ENCODE measurements at regions of chr18 and their contacts with region 1.

Region 1: DNA sequence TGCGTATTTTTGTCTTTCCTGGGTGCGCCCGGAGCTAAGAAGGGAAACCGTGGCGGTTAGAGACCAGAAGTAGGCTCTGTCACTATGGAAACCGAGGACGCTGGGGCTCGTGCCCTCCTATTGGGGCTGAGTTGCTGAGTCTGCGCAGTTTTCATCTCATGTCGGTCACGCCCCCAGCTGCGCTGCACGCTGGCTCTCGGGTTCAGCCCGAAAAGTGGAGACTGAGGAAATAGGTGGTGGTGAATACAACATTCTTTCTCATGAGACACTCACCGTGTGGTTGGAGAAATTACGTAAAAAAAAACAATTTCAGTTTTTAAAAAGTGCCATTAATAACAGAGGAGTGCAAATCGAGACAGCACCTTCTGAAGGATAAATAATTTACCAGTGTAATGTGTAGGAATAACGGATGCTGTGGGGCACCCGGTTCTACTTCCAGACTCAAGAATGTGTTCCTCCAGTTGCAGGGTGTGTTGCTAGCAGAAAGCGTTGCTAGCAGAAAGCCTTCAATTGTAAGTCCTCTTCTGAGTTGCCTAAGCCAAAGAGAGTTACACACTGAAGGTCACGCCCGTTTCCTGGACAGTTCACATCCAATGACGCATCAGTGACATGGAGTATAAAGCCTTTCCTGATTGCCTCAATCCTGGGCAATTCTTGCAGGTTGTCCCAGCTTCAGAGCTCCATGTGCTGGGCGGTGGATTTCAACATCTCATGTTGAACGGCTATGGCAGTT is 20.4 kb upstream of the CXXC1 start:
- DNase-seq: peak; percentile 70 to 93
- H3K4me3 ChIP-seq: peak overlapping the region; percentile 78
- H3K27ac ChIP-seq: peak overlapping the region; percentile 99
- H3K4me1 ChIP-seq: peaks cover 18% of the 10 kb centered on the region
- H3K27me3 ChIP-seq: no peaks in the 10 kb centered on the region; the same call in 1 of the 2 replicates
- CTCF ChIP-seq: no peak

Region 2: GRCh38 chr18:50266248-50266704 is 41.6 kb before region 1 on chr18 and contains the start of gene CFAP53:
- CTCF ChIA-PET with region 1: no interaction called
- POLR2A ChIA-PET with region 1: no interaction called
- intact Hi-C with region 1: loop called (anchors 2 kb)
- DNase-seq: peak; percentile 82 to 83
- H3K4me3 ChIP-seq: peak within 1 kb of the TSS; percentile 83
- H3K27ac ChIP-seq: peak within 1 kb of the TSS; percentile 2; the same call in 1 of the 2 replicates
- H3K4me1 ChIP-seq: peaks cover 5% of the 10 kb centered on the region
- H3K27me3 ChIP-seq: no peaks in the 10 kb centered on the region
- CTCF ChIP-seq: no peak
- total RNA-seq, gene CFAP53: 1.9 and 2.1 TPM in 2 replicates

Region 3: DNA sequence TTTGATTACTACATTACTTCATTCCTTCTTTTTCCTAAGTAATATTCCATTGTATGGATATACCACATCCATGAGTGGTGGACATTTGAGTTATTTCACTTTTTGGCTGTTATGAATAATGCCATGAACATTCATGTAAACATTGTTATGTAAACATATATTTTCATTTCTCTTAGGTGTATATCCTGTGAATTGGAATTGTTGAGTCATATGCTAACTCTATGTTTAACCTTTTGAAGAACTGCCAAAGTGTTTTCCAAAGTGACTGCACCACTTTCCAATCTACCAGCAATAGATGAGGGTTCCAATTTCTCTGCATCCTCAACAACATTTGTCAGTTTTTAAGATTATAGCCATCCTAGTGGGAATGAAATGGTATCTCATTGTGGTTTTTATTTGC is 22.3 kb after region 1 on chr18:
- CTCF ChIA-PET with region 1: no interaction called
- POLR2A ChIA-PET with region 1: no interaction called
- intact Hi-C with region 1: no loop called
- DNase-seq: no peak
- H3K4me3 ChIP-seq: no peak overlapping the region
- H3K27ac ChIP-seq: no peak overlapping the region
- H3K4me1 ChIP-seq: no peaks in the 10 kb centered on the region
- H3K27me3 ChIP-seq: peaks cover 6% of the 10 kb centered on the region; the same call in 1 of the 2 replicates
- CTCF ChIP-seq: no peak

Measured in PC-9 (cell line).